ENCODE measurements at regions of chr1 and their contacts with region 1.

Region 1: DNA sequence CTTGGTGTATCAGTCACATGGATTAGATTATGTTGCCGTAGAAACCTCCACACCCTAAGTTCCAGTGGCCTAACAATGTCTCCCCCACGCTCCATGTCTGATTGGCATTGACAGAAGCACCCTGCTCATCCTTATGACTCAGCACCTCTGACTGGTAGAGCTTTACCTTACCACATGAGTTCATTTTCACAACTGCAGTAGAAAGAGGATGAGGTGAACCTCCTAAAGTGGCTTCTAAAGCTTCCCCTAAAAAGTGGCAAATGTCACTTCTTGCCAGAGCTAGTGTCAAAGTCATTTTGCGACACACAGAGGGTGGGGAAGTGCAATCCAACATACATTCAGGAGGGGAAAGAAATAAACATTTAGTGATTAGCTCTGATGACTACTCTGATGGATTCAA is 30.6 kb upstream of the LYPD8 start:
- DNase-seq: no peak
- ATAC-seq: peak; percentile 95
- H3K4me3 ChIP-seq: no peak overlapping the region
- H3K27ac ChIP-seq: no peak overlapping the region
- H3K4me1 ChIP-seq: no peaks in the 10 kb centered on the region
- H3K27me3 ChIP-seq: no peaks in the 10 kb centered on the region
- CTCF ChIP-seq: no peak
- EP300 ChIP-seq: no peak
- POLR2A ChIP-seq: no peak
- RAD21 ChIP-seq: no peak

Region 2: DNA sequence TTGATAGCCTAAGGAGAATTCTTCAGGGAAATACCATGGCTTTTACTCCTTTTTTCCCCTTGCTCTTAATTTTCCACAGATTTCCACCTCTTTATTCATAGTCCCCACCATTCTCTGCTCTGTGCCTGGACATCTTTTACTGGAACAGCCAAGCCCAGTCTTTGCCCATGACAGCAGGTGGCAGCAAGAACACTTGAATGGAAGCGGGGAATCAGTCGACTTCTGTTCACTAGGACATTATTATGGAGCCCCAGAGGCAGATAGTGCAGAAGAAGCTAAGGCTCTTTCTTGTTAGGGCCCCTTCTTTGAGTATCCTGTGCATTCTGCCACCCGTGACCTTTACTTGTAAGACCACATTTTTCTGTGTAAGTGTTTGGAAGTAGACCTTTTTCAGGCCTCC is 89.9 kb before region 1 on chr1:
- CTCF ChIA-PET with region 1: interaction called, 15 read pairs
- POLR2A ChIA-PET with region 1: no interaction called
- RAD21 ChIA-PET with region 1: interaction called, 4 read pairs
- SMC1A ChIA-PET with region 1: interaction called, 9 read pairs
- in situ Hi-C with region 1: no loop called
- intact Hi-C with region 1: no loop called
- DNase-seq: no peak
- ATAC-seq: peak; percentile 86
- H3K4me3 ChIP-seq: no peak overlapping the region
- H3K27ac ChIP-seq: no peak overlapping the region
- H3K4me1 ChIP-seq: no peaks in the 10 kb centered on the region
- H3K27me3 ChIP-seq: no peaks in the 10 kb centered on the region
- CTCF ChIP-seq: peak; percentile 27 to 63 (median 35); a peak in 4 of 6 replicates
- EP300 ChIP-seq: no peak
- POLR2A ChIP-seq: no peak
- RAD21 ChIP-seq: peak; percentile 55

Region 3: GRCh38 chr1:248842781-248843331 is 56.7 kb after region 1 on chr1:
- CTCF ChIA-PET with region 1: no interaction called
- POLR2A ChIA-PET with region 1: no interaction called
- RAD21 ChIA-PET with region 1: no interaction called
- SMC1A ChIA-PET with region 1: no interaction called
- in situ Hi-C with region 1: no loop called
- intact Hi-C with region 1: no loop called
- DNase-seq: peak; percentile 62
- ATAC-seq: peak; percentile 46
- H3K4me3 ChIP-seq: 0 out of 2 replicates have a peak overlapping the region, but pooled peaks have one; percentile 10
- H3K27ac ChIP-seq: peak overlapping the region; percentile 65
- H3K4me1 ChIP-seq: peaks cover 10% of the 10 kb centered on the region
- H3K27me3 ChIP-seq: no peaks in the 10 kb centered on the region
- CTCF ChIP-seq: no peak
- EP300 ChIP-seq: 0 out of 4 replicates have a peak, but pooled peaks have one; percentile 17 to 67
- POLR2A ChIP-seq: peak; percentile 67
- RAD21 ChIP-seq: no peak

Region 4: DNA sequence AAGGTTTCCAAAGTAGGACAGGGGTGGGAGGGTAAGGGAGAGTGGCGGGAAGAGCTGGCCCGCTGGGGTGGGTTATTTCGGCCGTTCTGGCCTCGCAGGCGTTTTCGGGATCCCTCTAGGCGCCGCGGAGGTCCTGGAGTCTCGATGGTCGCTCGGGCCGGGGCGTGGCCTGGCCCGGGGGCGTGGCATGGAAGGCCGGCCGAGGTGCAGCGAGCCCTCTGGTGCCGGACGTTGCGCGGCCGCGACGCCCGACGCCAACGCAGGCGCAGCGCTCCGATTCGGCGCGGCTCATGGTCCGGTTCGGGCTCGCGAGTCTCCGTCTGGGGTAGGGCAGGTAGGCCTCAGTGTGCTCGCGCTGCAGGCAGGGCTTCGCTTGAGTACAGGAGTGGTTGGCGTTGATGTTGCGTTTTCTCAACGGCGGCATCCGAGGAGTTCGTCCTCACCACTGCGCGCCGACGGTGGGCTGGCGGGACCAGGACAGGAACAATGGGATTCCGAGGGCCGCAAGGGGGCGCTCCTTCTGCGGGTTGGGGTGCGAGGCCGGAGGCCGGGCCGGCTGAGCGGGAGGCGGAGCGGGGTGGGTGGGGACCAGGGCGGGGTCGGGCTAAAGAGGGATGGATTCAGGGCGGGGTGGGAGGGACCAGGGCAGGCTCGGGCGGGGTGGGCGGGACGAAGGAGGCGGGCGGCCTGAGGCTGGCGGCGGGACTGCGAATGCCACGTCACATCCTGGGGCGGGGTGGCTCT is 120.0 kb after region 1 on chr1 and contains the start of gene PGBD2:
- CTCF ChIA-PET with region 1: no interaction called
- POLR2A ChIA-PET with region 1: no interaction called
- RAD21 ChIA-PET with region 1: no interaction called
- SMC1A ChIA-PET with region 1: no interaction called
- in situ Hi-C with region 1: no loop called
- intact Hi-C with region 1: no loop called
- DNase-seq: peak; percentile 66
- ATAC-seq: peak; percentile 94
- H3K4me3 ChIP-seq: peak within 1 kb of the TSS; percentile 92
- H3K27ac ChIP-seq: peak within 1 kb of the TSS; percentile 82
- H3K4me1 ChIP-seq: peaks cover 2% of the 10 kb centered on the region; the same call in 1 of the 2 replicates
- H3K27me3 ChIP-seq: no peaks in the 10 kb centered on the region
- CTCF ChIP-seq: peak; percentile 57 to 80 (median 75)
- EP300 ChIP-seq: no peak
- POLR2A ChIP-seq: peak; percentile 98
- RAD21 ChIP-seq: peak; percentile 63
- polyA plus RNA-seq, gene PGBD2: 4.7 to 5.6 TPM

Measured in GM12878 (cell line).